BJ (cell line): ENCODE measurements at regions of chr4 and their contacts with region 1.

Region 1: DNA sequence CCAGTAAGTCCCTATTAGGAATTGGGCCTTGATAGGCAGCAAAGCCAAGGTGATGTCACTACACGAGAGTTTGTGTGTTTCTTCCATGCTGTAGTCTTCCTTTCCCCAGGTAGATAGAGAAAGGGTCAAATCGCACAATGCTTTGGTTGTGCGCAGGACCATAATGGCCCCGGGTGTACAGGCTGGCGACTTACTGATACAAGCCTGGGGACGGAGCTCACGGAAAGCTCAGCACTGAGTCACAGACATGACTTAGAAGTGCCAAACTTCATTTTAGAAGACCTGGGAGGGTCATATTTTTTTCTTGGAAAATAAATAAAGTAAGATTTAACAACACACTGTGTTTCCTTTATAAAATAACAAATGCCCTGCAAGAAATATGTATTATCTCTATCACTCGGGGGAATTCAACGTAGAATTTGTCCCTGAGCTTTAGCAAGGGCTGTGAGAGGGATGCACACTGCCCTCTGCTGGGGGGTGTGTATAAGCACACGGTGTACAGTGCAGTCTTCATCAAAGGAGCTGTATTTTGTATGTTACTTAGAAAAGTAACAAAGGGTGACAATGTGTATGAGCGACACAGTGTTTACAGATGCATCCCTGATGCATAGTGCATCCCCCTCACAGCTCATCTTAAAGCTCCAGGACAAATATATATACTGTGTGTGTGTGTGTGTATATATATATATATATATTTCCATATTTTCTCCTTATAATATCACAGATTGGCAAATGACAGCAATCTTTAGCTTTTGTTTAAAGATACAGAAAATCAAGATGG is 254.5 kb upstream of the VEGFC start:
- DNase-seq: no peak
- H3K4me3 ChIP-seq: no peak overlapping the region
- H3K27me3 ChIP-seq: no peaks in the 10 kb centered on the region
- CTCF ChIP-seq: peak; percentile 84

Region 2: GRCh38 chr4:176377780-176378179 is 669.5 kb before region 1 on chr4:
- CTCF ChIA-PET with region 1: interaction called, 28 read pairs
- POLR2A ChIA-PET with region 1: no interaction called
- DNase-seq: no peak
- H3K4me3 ChIP-seq: no peak overlapping the region
- H3K27me3 ChIP-seq: no peaks in the 10 kb centered on the region
- CTCF ChIP-seq: peak; percentile 48

Region 3: GRCh38 chr4:176792671-176793605 is 254.3 kb before region 1 on chr4 and contains the start of gene VEGFC:
- CTCF ChIA-PET with region 1: interaction called, 21 read pairs
- POLR2A ChIA-PET with region 1: no interaction called
- DNase-seq: no peak
- H3K4me3 ChIP-seq: peak within 1 kb of the TSS; percentile 80
- H3K27me3 ChIP-seq: no peaks in the 10 kb centered on the region
- CTCF ChIP-seq: peak; percentile 17; the same call in 1 of the 2 replicates
- polyA plus RNA-seq, gene VEGFC: 47.7 and 68.4 TPM in 2 replicates

Region 4: GRCh38 chr4:176798540-176798939 is 248.7 kb before region 1 on chr4:
- CTCF ChIA-PET with region 1: interaction called, 10 read pairs
- POLR2A ChIA-PET with region 1: no interaction called
- DNase-seq: no peak
- H3K4me3 ChIP-seq: no peak overlapping the region
- H3K27me3 ChIP-seq: no peaks in the 10 kb centered on the region
- CTCF ChIP-seq: no peak

Region 5: GRCh38 chr4:177033135-177033534 is 14.1 kb before region 1 on chr4:
- CTCF ChIA-PET with region 1: interaction called, 14 read pairs
- POLR2A ChIA-PET with region 1: no interaction called
- DNase-seq: no peak
- H3K4me3 ChIP-seq: no peak overlapping the region
- H3K27me3 ChIP-seq: no peaks in the 10 kb centered on the region
- CTCF ChIP-seq: no peak

Region 6: GRCh38 chr4:177367336-177367735 is 320.1 kb after region 1 on chr4:
- CTCF ChIA-PET with region 1: no interaction called
- POLR2A ChIA-PET with region 1: no interaction called
- DNase-seq: no peak
- H3K4me3 ChIP-seq: no peak overlapping the region
- H3K27me3 ChIP-seq: no peaks in the 10 kb centered on the region
- CTCF ChIP-seq: peak; percentile 36; the same call in 1 of the 2 replicates